Adrenal gland (tissue), 19 donors: ENCODE measurements at regions of chr6 and their contacts with region 1.

Region 1: GRCh38 chr6:10800829-10801535 is 37.4 kb downstream of the MAK start:
- DNase-seq: peak; percentile 25 to 80 (median 58)
- H3K4me3 ChIP-seq: no peak overlapping the region
- H3K27ac ChIP-seq: no peak overlapping the region
- H3K4me1 ChIP-seq: no peaks in the 10 kb centered on the region
- H3K27me3 ChIP-seq: no peaks in the 10 kb centered on the region
- CTCF ChIP-seq: peak; percentile 85 to 98 (median 92)
- POLR2A ChIP-seq: no peak

Region 2: DNA sequence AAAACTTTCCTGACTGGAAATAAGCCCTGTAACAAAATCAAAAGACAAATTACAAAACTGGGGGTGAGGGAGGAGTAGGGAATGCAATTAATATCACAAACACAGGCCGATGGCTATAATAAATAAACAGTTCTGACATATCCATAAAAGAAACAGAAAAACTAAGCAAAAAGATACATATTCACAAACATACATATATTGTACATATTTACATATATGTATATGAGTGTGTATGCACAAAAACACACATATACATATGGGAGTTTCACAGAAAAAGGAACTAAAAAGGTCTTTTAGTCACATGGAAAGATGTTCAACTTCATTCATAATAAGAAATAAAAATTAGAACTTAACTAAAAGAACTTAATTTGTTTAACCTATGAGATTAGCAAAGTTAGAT is 678.8 kb before region 1 on chr6:
- intact Hi-C with region 1: no loop called
- DNase-seq: no peak
- H3K4me3 ChIP-seq: no peak overlapping the region
- H3K27ac ChIP-seq: no peak overlapping the region
- H3K4me1 ChIP-seq: no peaks in the 10 kb centered on the region
- H3K27me3 ChIP-seq: no peaks in the 10 kb centered on the region
- CTCF ChIP-seq: no peak
- POLR2A ChIP-seq: no peak

Region 3: GRCh38 chr6:10478187-10479040 is 322.6 kb before region 1 on chr6:
- intact Hi-C with region 1: loop called in 1 of 2 experiments (anchors 10 kb)
- DNase-seq: no peak
- H3K4me3 ChIP-seq: no peak overlapping the region
- H3K27ac ChIP-seq: no peak overlapping the region
- H3K4me1 ChIP-seq: no peaks in the 10 kb centered on the region
- H3K27me3 ChIP-seq: no peaks in the 10 kb centered on the region
- CTCF ChIP-seq: peak; percentile 38 to 65 (median 52)
- POLR2A ChIP-seq: no peak

Region 4: GRCh38 chr6:10582774-10583508 is 218.0 kb before region 1 on chr6:
- intact Hi-C with region 1: no loop called
- DNase-seq: no peak
- H3K4me3 ChIP-seq: no peak overlapping the region
- H3K27ac ChIP-seq: no peak overlapping the region
- H3K4me1 ChIP-seq: no peaks in the 10 kb centered on the region
- H3K27me3 ChIP-seq: peaks cover under 1% of the 10 kb centered on the region
- CTCF ChIP-seq: no peak
- POLR2A ChIP-seq: no peak

Region 5: GRCh38 chr6:10694302-10695085 is 106.5 kb before region 1 on chr6 and contains the starts of genes C6orf52 and PAK1IP1:
- intact Hi-C with region 1: loop called in 1 of 2 experiments (anchors 10 kb)
- DNase-seq: peak; percentile 89 to 96 (median 93)
- H3K4me3 ChIP-seq: peak within 1 kb of the TSS; percentile 68 to 87 (median 78)
- H3K27ac ChIP-seq: peak within 1 kb of the TSS; percentile 80 to 98 (median 94)
- H3K4me1 ChIP-seq: peaks cover 18 to 25% of the 10 kb centered on the region in 2 donors
- H3K27me3 ChIP-seq: no peaks in the 10 kb centered on the region
- CTCF ChIP-seq: peak in 1 of 6 experiments; percentile 6
- POLR2A ChIP-seq: peak; percentile 65 to 74
- total RNA-seq, gene C6orf52: 0.96 to 5.5 (median 2.6) TPM in 6 of 9 donors, not detected in the others
- total RNA-seq, gene PAK1IP1: 4.5 to 17.6 (median 13.8) TPM